Activated CD4-positive, alpha-beta T cell treated with anti-CD3 and anti-CD28 coated beads, Interleukin-2, amount 10 ng/mL, durations not matched to agents 24 days and 14 days (primary cell): ENCODE measurements at regions of chr10 and their contacts with region 1.

Region 1: DNA sequence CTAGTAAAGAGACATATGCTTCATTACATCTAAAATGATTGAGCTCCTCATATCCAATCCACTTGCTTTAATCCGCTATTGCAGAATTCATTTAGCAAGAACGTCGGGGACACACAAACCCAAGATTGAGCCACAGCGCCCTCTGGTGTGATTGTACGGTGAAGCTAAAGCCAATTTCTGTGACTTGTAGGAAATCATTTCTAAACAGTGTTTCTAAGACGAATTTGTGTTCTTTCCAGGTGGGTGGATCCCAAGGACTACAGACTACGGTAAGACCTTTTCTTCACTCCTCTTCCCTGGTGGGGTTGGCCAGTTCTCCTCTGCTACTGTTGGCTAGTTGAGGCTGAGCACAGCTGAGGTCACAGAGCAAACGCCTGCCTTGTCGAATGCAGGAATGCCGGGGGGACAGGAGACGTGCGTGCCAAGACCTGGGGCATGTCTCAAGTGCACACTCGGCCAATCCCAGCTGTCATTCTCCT is 5.2 kb downstream of the DMBT1 start:
- DNase-seq: peak; percentile 87
- H3K4me3 Mint-ChIP-seq: no peak overlapping the region
- H3K27ac Mint-ChIP-seq: no peak overlapping the region
- H3K4me1 Mint-ChIP-seq: no peaks in the 10 kb centered on the region
- H3K27me3 Mint-ChIP-seq: peaks cover 25% of the 10 kb centered on the region

Region 2: DNA sequence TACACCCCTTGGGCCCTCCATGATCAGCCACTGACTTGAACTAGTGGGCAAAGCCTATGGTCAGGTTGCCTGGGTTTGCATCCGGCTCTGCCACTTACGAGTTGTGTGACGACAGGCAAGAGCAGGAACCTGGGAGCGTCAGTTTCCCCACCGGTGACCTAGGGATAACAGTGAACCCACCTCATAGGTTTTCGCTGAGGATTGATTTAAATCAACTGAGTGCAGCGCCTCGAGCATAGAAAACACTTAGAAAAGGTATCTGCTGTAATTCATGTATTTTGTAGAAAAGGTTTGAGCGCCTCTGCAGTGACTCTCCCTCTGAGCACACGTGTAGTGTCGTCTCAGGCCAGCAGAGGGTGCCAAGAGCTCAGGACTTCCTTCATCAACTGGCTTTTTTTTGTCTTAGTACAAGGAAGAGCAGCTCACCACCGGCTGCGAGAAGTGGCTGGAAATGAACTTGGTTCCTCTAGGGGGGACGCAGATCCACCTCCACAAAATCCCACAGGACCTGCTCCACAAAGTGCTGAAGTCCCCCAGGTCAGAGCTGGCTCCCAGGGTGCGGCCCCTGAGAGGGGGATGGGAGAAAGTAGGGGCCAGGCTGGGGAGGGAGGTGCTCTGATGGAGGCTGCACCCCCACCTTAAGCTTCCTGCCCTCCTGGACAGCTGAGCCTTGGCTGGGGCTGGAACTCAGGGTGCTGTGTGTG is 267.0 kb before region 1 on chr10:
- intact Hi-C with region 1: loop called (anchors 1 kb)
- DNase-seq: peak; percentile 87
- H3K4me3 Mint-ChIP-seq: no peak overlapping the region
- H3K27ac Mint-ChIP-seq: peak overlapping the region; percentile 18
- H3K4me1 Mint-ChIP-seq: peaks cover 8% of the 10 kb centered on the region
- H3K27me3 Mint-ChIP-seq: peaks cover 4% of the 10 kb centered on the region

Region 3: GRCh38 chr10:122342293-122343134 is 223.3 kb before region 1 on chr10:
- intact Hi-C with region 1: loop called (anchors 2 kb)
- DNase-seq: peak; percentile 83
- H3K4me3 Mint-ChIP-seq: no peak overlapping the region
- H3K27ac Mint-ChIP-seq: no peak overlapping the region
- H3K4me1 Mint-ChIP-seq: no peaks in the 10 kb centered on the region
- H3K27me3 Mint-ChIP-seq: peaks cover 5% of the 10 kb centered on the region

Region 4: DNA sequence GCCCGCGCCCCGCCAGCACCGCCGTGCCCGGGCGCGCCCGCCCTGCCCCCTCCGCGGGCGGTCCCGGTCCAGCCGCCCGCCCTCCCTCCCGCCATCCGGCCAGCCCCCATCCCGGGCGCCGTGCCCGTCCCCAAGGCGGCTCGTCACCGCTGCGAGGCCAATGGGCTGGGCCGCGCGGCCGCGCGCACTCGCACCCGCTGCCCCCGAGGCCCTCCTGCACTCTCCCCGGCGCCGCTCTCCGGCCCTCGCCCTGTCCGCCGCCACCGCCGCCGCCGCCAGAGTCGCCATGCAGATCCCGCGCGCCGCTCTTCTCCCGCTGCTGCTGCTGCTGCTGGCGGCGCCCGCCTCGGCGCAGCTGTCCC is 104.4 kb before region 1 on chr10 and contains the start of gene HTRA1:
- intact Hi-C with region 1: loop called (anchors 10 kb)
- DNase-seq: no peak
- H3K4me3 Mint-ChIP-seq: peak within 1 kb of the TSS; percentile 60
- H3K27ac Mint-ChIP-seq: no peak within 1 kb of the TSS
- H3K4me1 Mint-ChIP-seq: peaks cover 2% of the 10 kb centered on the region
- H3K27me3 Mint-ChIP-seq: peaks cover 71% of the 10 kb centered on the region
- total RNA-seq, gene HTRA1: not detected in 2 replicates

Region 5: DNA sequence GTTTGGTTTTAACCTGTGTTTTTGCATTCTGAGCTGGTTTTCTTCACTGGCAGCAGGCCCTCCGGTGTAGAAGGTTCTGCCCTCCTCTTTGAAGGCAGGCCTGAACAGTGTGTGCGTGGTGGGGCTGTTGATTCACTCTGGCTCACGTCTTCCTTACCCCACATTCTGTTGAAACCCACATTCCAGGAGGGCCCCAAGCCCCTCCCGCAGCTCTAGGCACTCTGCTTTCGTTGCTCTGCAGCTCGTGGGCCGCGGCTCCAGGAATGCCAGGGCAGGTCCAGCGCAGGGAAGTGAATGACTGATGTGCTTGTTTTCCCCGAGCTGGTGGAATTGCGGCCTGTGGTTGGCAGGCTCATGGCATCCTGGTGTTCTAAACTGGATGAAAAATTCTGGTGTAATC is 55.4 kb before region 1 on chr10:
- intact Hi-C with region 1: loop called (anchors 5 kb)
- DNase-seq: no peak
- H3K4me3 Mint-ChIP-seq: no peak overlapping the region
- H3K27ac Mint-ChIP-seq: no peak overlapping the region
- H3K4me1 Mint-ChIP-seq: peaks cover 8% of the 10 kb centered on the region
- H3K27me3 Mint-ChIP-seq: peaks cover 2% of the 10 kb centered on the region

Region 6: GRCh38 chr10:122786269-122786668 is 220.5 kb after region 1 on chr10:
- intact Hi-C with region 1: no loop called
- DNase-seq: peak; percentile 67
- H3K4me3 Mint-ChIP-seq: no peak overlapping the region
- H3K27ac Mint-ChIP-seq: no peak overlapping the region
- H3K4me1 Mint-ChIP-seq: no peaks in the 10 kb centered on the region
- H3K27me3 Mint-ChIP-seq: no peaks in the 10 kb centered on the region